Right lobe of liver (tissue), 6 donors: ENCODE measurements at regions of chr7 and their contacts with region 1.

Region 1: GRCh38 chr7:107890962-107891635 is at the start of gene DLD:
- DNase-seq: peak; percentile 94 to 97 (median 95)
- ATAC-seq: peak; percentile 96 to 99 (median 98)
- H3K4me3 ChIP-seq: peak within 1 kb of the TSS; percentile 58 to 66 (median 65)
- H3K27ac ChIP-seq: peak within 1 kb of the TSS; percentile 92 to 95 (median 93)
- H3K4me1 ChIP-seq: peaks cover 0 to 16% (median 7%) of the 10 kb centered on the region in 4 donors
- H3K27me3 ChIP-seq: no peaks in the 10 kb centered on the region
- CTCF ChIP-seq: no peak
- POLR2A ChIP-seq: peak; percentile 94
- total RNA-seq, gene DLD: 51.5 to 69.4 (median 61.0) TPM

Region 2: GRCh38 chr7:107643407-107643806 is 247.7 kb before region 1 on chr7:
- intact Hi-C with region 1: no loop called
- DNase-seq: no peak
- ATAC-seq: no peak
- H3K4me3 ChIP-seq: no peak overlapping the region
- H3K27ac ChIP-seq: no peak overlapping the region
- H3K4me1 ChIP-seq: no peaks in the 10 kb centered on the region
- H3K27me3 ChIP-seq: no peaks in the 10 kb centered on the region
- CTCF ChIP-seq: no peak
- POLR2A ChIP-seq: no peak

Region 3: GRCh38 chr7:108034586-108034985 is 143.5 kb after region 1 on chr7:
- intact Hi-C with region 1: no loop called
- DNase-seq: no peak
- ATAC-seq: no peak
- H3K4me3 ChIP-seq: no peak overlapping the region
- H3K27ac ChIP-seq: no peak overlapping the region
- H3K4me1 ChIP-seq: no peaks in the 10 kb centered on the region
- H3K27me3 ChIP-seq: no peaks in the 10 kb centered on the region
- CTCF ChIP-seq: no peak
- POLR2A ChIP-seq: no peak

Region 4: DNA sequence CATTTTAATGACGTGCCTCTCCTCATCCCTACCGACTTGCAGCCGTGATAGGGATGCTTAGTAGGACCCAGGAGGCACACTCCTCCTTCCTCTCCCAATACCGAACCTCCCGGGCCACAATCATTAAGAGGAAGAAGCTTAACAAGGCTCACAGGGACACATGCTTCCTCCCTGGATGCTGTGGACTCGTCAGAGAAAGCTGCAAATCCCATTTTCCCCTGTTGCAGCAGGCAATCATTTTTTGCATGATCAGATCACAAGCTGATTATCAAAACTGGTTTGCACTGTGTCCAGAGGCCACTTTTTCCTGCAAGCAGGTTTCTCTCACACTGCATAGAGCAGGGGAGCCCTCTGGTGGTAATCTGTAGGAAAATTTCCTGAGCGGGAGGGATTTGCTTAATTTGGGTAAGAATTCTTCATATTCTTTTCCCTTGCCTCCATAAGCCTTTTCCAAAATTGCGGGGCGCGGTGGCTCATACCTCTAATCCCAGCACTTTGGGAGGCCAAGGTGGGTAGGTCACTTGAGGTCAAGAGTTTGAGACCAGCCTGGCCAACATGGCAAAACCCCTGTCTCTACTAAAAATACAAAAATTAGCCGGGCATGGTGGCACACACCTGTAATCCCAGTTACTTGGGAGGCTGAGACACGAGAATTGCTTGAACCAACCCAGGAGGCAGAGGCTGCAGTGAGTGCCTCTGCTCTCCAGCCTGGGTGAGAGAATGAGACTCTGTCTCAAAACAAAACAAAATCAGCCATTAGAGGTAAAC is 255.2 kb after region 1 on chr7:
- intact Hi-C with region 1: loop called in 1 of 2 experiments (anchors 5 kb)
- DNase-seq: peak in 2 of 3 donors; percentile 17 to 65
- ATAC-seq: peak; percentile 92 to 96 (median 94)
- H3K4me3 ChIP-seq: no peak overlapping the region
- H3K27ac ChIP-seq: no peak overlapping the region
- H3K4me1 ChIP-seq: no peaks in the 10 kb centered on the region
- H3K27me3 ChIP-seq: no peaks in the 10 kb centered on the region
- CTCF ChIP-seq: peak; percentile 85 to 91 (median 90)
- POLR2A ChIP-seq: no peak